ENCODE measurements at regions of chr19 and their contacts with region 1.

Region 1: DNA sequence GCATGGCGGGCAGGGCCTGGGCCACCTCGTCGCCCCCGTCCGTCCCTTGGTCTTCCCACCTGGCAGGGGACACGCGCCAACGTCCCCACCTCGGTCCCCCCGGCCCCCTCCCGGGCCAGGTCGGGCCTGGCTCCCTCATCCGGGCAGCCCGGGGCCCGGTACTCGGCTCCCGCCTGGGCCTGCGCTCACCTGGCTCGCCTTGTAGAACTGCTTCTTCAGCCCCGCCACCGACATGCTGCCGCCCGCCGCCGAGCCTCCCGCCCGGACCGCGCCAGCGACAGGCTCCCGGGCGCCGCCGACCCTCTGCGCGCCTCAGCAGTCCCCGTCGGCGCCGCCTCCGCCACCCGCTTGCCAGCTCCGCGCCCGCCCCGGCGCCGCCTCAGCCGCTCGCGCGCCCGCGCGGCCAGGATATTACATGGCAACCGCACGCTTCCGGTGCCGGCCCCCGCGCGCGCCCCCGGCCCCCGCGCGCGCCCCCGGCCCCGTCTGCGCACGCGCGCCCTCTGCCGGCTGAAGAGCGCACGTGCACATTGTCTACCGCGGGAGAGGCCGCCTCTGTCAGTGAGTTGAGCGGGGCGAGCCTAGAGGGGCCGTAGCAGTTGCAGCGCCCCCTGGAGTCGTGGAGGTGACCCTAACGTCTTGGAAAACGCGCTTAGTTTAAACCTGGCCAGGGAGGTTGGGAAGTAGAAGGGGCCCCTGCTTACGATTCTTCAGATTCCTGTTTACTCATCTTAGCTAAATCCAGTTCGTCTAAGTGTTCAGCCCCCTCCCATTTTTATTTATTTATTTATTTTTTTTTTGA is at the start of gene SH3GL1:
- DNase-seq: peak; percentile 82 to 98 (median 92)
- ATAC-seq: peak; percentile 61
- H3K4me3 ChIP-seq: peak within 1 kb of the TSS; percentile 98
- H3K4me3 Mint-ChIP-seq: peak within 1 kb of the TSS; percentile 96
- H3K27ac ChIP-seq: peak within 1 kb of the TSS; percentile 91 to 93
- H3K27ac Mint-ChIP-seq: peak within 1 kb of the TSS; percentile 95
- H3K4me1 ChIP-seq: peaks cover 57% of the 10 kb centered on the region
- H3K4me1 Mint-ChIP-seq: peaks cover 69% of the 10 kb centered on the region
- H3K27me3 ChIP-seq: no peaks in the 10 kb centered on the region
- H3K27me3 Mint-ChIP-seq: no peaks in the 10 kb centered on the region
- CTCF ChIP-seq: peak; percentile 88
- total RNA-seq, gene SH3GL1: 39.3 to 40.9 TPM

Region 2: DNA sequence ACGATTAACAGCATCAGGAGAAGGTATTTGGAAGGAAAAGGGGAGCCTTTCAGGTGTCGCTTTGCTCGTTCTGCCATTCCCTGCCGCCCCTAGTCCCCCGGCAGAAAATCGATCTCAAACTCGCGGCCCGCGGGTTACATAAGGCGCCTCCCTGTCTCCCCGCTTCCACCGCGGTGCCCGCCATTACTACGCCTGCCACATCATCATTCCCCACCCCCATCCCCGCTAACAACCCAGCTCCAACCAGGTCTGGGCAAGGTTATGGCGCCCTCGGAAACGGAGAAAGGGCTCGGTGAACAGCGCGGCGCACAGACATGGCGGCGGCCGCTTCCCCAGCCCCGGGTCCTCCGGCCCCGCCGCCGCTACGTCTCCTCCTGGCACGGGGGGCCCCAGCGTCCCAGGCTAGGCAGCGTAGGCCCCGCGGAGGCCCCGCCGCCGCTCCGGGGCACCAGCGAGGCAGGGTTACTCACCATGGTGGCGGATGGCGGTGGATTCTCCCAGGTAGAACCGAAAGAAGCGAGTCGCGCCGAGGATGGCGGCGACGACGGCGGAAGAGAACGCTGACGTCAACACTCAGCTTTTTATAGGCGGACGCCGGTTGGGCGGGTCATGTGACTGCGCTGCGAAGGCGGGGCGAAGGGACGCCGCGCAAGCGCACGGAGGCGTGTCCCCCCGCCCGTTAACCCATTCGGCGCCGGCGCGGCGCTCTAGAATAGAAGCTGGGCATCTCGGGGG is 415.3 kb before region 1 on chr19 and contains the start of gene EEF2:
- CTCF ChIA-PET with region 1: no interaction called
- POLR2A ChIA-PET with region 1: interaction called, 5 read pairs
- intact Hi-C with region 1: loop called in 1 of 2 experiments (anchors 5 kb)
- DNase-seq: peak; percentile 89 to 97 (median 92)
- ATAC-seq: peak; percentile 58
- H3K4me3 ChIP-seq: peak within 1 kb of the TSS; percentile 88
- H3K4me3 Mint-ChIP-seq: peak within 1 kb of the TSS; percentile 97
- H3K27ac ChIP-seq: peak within 1 kb of the TSS; percentile 90 to 92
- H3K27ac Mint-ChIP-seq: peak within 1 kb of the TSS; percentile 91
- H3K4me1 ChIP-seq: peaks cover 70% of the 10 kb centered on the region
- H3K4me1 Mint-ChIP-seq: peaks cover 52% of the 10 kb centered on the region
- H3K27me3 ChIP-seq: no peaks in the 10 kb centered on the region
- H3K27me3 Mint-ChIP-seq: no peaks in the 10 kb centered on the region
- CTCF ChIP-seq: no peak
- total RNA-seq, gene EEF2: 2,756 to 2,866 TPM

Region 3: GRCh38 chr19:4246767-4247593 is 153.4 kb before region 1 on chr19 and contains the start of gene YJU2:
- CTCF ChIA-PET with region 1: interaction called, 5 read pairs
- POLR2A ChIA-PET with region 1: interaction called, 16 read pairs
- intact Hi-C with region 1: loop called (anchors 1 to 2 kb)
- DNase-seq: peak; percentile 96 to 100 (median 98)
- ATAC-seq: peak; percentile 94
- H3K4me3 ChIP-seq: peak within 1 kb of the TSS; percentile 73
- H3K4me3 Mint-ChIP-seq: peak within 1 kb of the TSS; percentile 93
- H3K27ac ChIP-seq: peak within 1 kb of the TSS; percentile 94 to 99
- H3K27ac Mint-ChIP-seq: peak within 1 kb of the TSS; percentile 95
- H3K4me1 ChIP-seq: peaks cover 22% of the 10 kb centered on the region
- H3K4me1 Mint-ChIP-seq: peaks cover 17% of the 10 kb centered on the region
- H3K27me3 ChIP-seq: no peaks in the 10 kb centered on the region
- H3K27me3 Mint-ChIP-seq: peaks cover 1% of the 10 kb centered on the region
- CTCF ChIP-seq: peak; percentile 58
- total RNA-seq, gene YJU2: 32.9 to 33.7 TPM

Region 4: GRCh38 chr19:4342615-4343369 is 57.5 kb before region 1 on chr19:
- CTCF ChIA-PET with region 1: interaction called, 21 read pairs
- POLR2A ChIA-PET with region 1: interaction called, 31 read pairs
- intact Hi-C with region 1: loop called in 1 of 2 experiments (anchors 2 kb)
- DNase-seq: peak; percentile 79 to 99 (median 86)
- ATAC-seq: peak; percentile 81
- H3K4me3 ChIP-seq: peak overlapping the region; percentile 93
- H3K4me3 Mint-ChIP-seq: peak overlapping the region; percentile 91
- H3K27ac ChIP-seq: peak overlapping the region; percentile 70 to 92
- H3K27ac Mint-ChIP-seq: peak overlapping the region; percentile 83
- H3K4me1 ChIP-seq: peaks cover 40% of the 10 kb centered on the region
- H3K4me1 Mint-ChIP-seq: peaks cover 37% of the 10 kb centered on the region
- H3K27me3 ChIP-seq: no peaks in the 10 kb centered on the region
- H3K27me3 Mint-ChIP-seq: no peaks in the 10 kb centered on the region
- CTCF ChIP-seq: peak; percentile 34

Region 5: GRCh38 chr19:4375164-4376027 is 24.9 kb before region 1 on chr19:
- CTCF ChIA-PET with region 1: interaction called, 63 read pairs
- POLR2A ChIA-PET with region 1: interaction called, 33 read pairs
- intact Hi-C with region 1: no loop called
- DNase-seq: no peak
- ATAC-seq: no peak
- H3K4me3 ChIP-seq: no peak overlapping the region
- H3K4me3 Mint-ChIP-seq: no peak overlapping the region
- H3K27ac ChIP-seq: no peak overlapping the region
- H3K27ac Mint-ChIP-seq: peak overlapping the region; percentile 71
- H3K4me1 ChIP-seq: peaks cover 100% of the 10 kb centered on the region
- H3K4me1 Mint-ChIP-seq: peaks cover 44% of the 10 kb centered on the region
- H3K27me3 ChIP-seq: no peaks in the 10 kb centered on the region
- H3K27me3 Mint-ChIP-seq: no peaks in the 10 kb centered on the region
- CTCF ChIP-seq: no peak

Region 6: GRCh38 chr19:4471403-4472173 is 71.3 kb after region 1 on chr19:
- CTCF ChIA-PET with region 1: interaction called, 3 read pairs
- POLR2A ChIA-PET with region 1: interaction called, 25 read pairs
- intact Hi-C with region 1: loop called (anchors 1 kb)
- DNase-seq: peak; percentile 92 to 100 (median 96)
- ATAC-seq: peak; percentile 84
- H3K4me3 ChIP-seq: peak overlapping the region; percentile 64
- H3K4me3 Mint-ChIP-seq: no peak overlapping the region
- H3K27ac ChIP-seq: peak overlapping the region; percentile 71 to 72
- H3K27ac Mint-ChIP-seq: no peak overlapping the region
- H3K4me1 ChIP-seq: peaks cover 35% of the 10 kb centered on the region
- H3K4me1 Mint-ChIP-seq: peaks cover 22% of the 10 kb centered on the region
- H3K27me3 ChIP-seq: no peaks in the 10 kb centered on the region
- H3K27me3 Mint-ChIP-seq: no peaks in the 10 kb centered on the region
- CTCF ChIP-seq: no peak

Region 7: GRCh38 chr19:4576016-4576933 is 175.9 kb after region 1 on chr19:
- CTCF ChIA-PET with region 1: no interaction called
- POLR2A ChIA-PET with region 1: no interaction called
- intact Hi-C with region 1: no loop called
- DNase-seq: peak; percentile 52 to 78 (median 64)
- ATAC-seq: peak; percentile 62
- H3K4me3 ChIP-seq: no peak overlapping the region
- H3K4me3 Mint-ChIP-seq: no peak overlapping the region
- H3K27ac ChIP-seq: no peak overlapping the region
- H3K27ac Mint-ChIP-seq: no peak overlapping the region
- H3K4me1 ChIP-seq: no peaks in the 10 kb centered on the region
- H3K4me1 Mint-ChIP-seq: no peaks in the 10 kb centered on the region
- H3K27me3 ChIP-seq: peaks cover 39 to 58% of the 10 kb centered on the region in 2 experiments
- H3K27me3 Mint-ChIP-seq: peaks cover 47% of the 10 kb centered on the region
- CTCF ChIP-seq: peak; percentile 65

Region 8: GRCh38 chr19:4909897-4910593 is 509.7 kb after region 1 on chr19:
- CTCF ChIA-PET with region 1: no interaction called
- POLR2A ChIA-PET with region 1: no interaction called
- intact Hi-C with region 1: loop called in 1 of 2 experiments (anchors 5 kb)
- DNase-seq: peak; percentile 87 to 96 (median 92)
- ATAC-seq: peak; percentile 88
- H3K4me3 ChIP-seq: peak overlapping the region; percentile 51
- H3K4me3 Mint-ChIP-seq: peak overlapping the region; percentile 98
- H3K27ac ChIP-seq: no peak overlapping the region
- H3K27ac Mint-ChIP-seq: peak overlapping the region; percentile 84
- H3K4me1 ChIP-seq: peaks cover 58% of the 10 kb centered on the region
- H3K4me1 Mint-ChIP-seq: peaks cover 52% of the 10 kb centered on the region
- H3K27me3 ChIP-seq: no peaks in the 10 kb centered on the region
- H3K27me3 Mint-ChIP-seq: no peaks in the 10 kb centered on the region
- CTCF ChIP-seq: no peak